Adrenal gland (tissue), 19 donors: ENCODE measurements at regions of chr2 and their contacts with region 1.

Region 1: GRCh38 chr2:28406276-28407096 is 13.8 kb downstream of the FOSL2 start:
- DNase-seq: peak in 6 of 7 donors; percentile 51 to 77 (median 69)
- H3K4me3 ChIP-seq: peak overlapping the region in 1 of 4 donors; percentile 15
- H3K27ac ChIP-seq: peak overlapping the region; percentile 31 to 100 (median 59)
- H3K4me1 ChIP-seq: peaks cover 58 to 79% of the 10 kb centered on the region in 2 donors
- H3K27me3 ChIP-seq: no peaks in the 10 kb centered on the region
- CTCF ChIP-seq: peak in 1 of 6 experiments; percentile 20
- POLR2A ChIP-seq: no peak

Region 2: DNA sequence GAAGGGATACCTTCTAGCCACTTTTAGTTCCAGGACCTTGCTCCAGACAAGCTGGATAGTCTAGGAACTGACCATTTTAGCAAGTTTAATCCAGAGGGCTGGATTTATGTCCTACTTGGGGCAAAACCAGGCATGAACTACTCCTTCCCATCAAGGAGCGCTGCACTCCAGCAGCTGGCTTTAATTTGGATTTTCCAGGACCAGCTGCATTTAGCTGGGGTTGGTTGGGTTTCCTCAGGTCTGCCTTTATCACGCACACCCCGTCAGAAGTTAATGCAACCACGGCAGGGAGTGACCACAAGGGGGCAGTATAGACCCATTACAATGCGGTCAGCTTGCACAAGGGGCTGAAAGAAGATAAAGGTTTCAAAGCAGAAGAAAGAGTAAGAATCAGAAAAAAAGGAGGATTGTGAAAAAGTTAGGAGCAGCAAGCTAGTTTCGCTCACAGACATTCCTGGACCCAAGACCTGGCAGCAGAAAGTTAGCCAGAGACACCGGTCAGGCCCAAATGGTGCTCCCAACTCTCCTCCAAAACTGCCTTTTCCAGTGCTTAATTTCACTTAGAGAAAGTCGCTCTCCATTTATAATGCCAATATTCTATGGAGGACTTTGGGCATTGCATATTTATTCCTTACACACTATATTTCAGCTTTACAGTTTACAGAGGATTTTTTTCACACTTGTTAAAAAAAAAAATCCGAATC is 702.7 kb before region 1 on chr2:
- intact Hi-C with region 1: loop called in 1 of 2 experiments (anchors 10 kb)
- DNase-seq: peak; percentile 87 to 96 (median 89)
- H3K4me3 ChIP-seq: no peak overlapping the region
- H3K27ac ChIP-seq: peak overlapping the region in 3 of 5 donors; percentile 51 to 85 (median 54)
- H3K4me1 ChIP-seq: peaks cover 22 to 37% of the 10 kb centered on the region in 2 donors
- H3K27me3 ChIP-seq: no peaks in the 10 kb centered on the region
- CTCF ChIP-seq: peak; percentile 93 to 98 (median 95)
- POLR2A ChIP-seq: no peak

Region 3: GRCh38 chr2:27890146-27890923 is 516.2 kb before region 1 on chr2 and contains the starts of genes BABAM2 and RBKS:
- intact Hi-C with region 1: loop called in 1 of 2 experiments (anchors 10 kb)
- DNase-seq: peak; percentile 88 to 96 (median 93)
- H3K4me3 ChIP-seq: peak within 1 kb of the TSS; percentile 28 to 91 (median 78)
- H3K27ac ChIP-seq: peak within 1 kb of the TSS; percentile 90 to 100 (median 98)
- H3K4me1 ChIP-seq: peaks cover 31 to 81% of the 10 kb centered on the region in 2 donors
- H3K27me3 ChIP-seq: no peaks in the 10 kb centered on the region
- CTCF ChIP-seq: peak in 1 of 6 experiments; percentile 3
- POLR2A ChIP-seq: peak; percentile 79 to 91
- total RNA-seq, gene BABAM2: 88.2 to 925 (median 373) TPM
- total RNA-seq, gene RBKS: 9.1 to 54.4 (median 25.9) TPM

Region 4: DNA sequence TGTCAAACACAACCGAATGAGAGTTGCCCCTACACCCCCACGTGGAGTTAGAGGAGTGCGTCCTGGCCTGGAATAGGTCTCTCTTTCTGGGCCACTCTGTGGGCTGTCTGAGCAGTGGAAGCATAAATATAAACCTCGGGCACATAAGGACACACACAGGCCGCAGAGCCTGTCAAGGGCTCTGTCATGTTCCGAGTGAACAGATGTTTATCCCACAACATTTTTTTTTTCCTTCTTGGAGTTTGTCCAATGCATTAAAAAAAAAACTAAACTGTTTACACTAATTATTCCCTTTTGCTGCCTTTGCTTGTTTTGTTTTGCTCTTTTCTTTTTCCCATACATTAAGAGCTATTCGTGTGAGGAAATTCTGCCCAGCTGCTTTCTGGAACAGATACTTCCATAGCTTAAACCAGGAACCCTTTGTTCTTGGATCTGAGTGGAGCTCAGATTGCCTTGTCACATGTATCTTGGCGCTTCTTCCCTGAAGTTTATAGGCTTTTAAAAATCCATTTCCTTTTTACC is 242.1 kb before region 1 on chr2:
- intact Hi-C with region 1: no loop called
- DNase-seq: peak in 4 of 7 donors; percentile 52 to 85 (median 64)
- H3K4me3 ChIP-seq: no peak overlapping the region
- H3K27ac ChIP-seq: peak overlapping the region in 3 of 5 donors; percentile 35 to 66 (median 45)
- H3K4me1 ChIP-seq: peaks cover 23 to 40% of the 10 kb centered on the region in 2 donors
- H3K27me3 ChIP-seq: no peaks in the 10 kb centered on the region
- CTCF ChIP-seq: no peak
- POLR2A ChIP-seq: no peak

Region 5: DNA sequence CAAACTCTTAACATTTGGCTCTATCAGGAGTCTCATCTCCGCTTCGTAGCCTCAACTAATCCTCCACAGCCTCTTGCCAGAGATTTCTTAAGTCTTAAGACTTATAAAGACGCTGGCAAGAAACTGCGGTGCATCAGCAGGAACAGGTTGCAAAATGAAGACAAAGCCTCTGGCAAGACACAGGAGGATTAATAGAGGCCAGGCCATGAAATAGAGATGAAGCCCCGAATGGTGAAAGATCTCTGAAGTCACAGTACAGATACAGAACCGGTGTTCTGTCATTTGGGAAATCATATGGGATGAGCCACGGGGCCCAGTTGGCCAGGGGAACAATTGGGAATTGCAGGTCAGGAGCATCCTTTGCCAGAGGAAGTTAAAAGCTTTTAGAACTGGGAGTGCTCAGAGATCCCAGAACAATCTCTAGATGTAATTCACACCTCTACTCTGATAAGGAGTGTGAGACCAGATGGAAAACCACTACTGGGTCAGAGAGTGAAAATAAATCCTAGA is 204.8 kb before region 1 on chr2:
- intact Hi-C with region 1: no loop called
- DNase-seq: no peak
- H3K4me3 ChIP-seq: no peak overlapping the region
- H3K27ac ChIP-seq: no peak overlapping the region
- H3K4me1 ChIP-seq: peaks cover 0 to 13% of the 10 kb centered on the region in 2 donors
- H3K27me3 ChIP-seq: no peaks in the 10 kb centered on the region
- CTCF ChIP-seq: no peak
- POLR2A ChIP-seq: no peak

Region 6: GRCh38 chr2:28392297-28393113 is 14.0 kb before region 1 on chr2 and contains the start of gene FOSL2:
- intact Hi-C with region 1: no loop called
- DNase-seq: peak; percentile 97 to 99 (median 98)
- H3K4me3 ChIP-seq: peak within 1 kb of the TSS; percentile 87 to 90 (median 89)
- H3K27ac ChIP-seq: peak within 1 kb of the TSS; percentile 94 to 100 (median 98)
- H3K4me1 ChIP-seq: peaks cover 12 to 18% of the 10 kb centered on the region in 2 donors
- H3K27me3 ChIP-seq: no peaks in the 10 kb centered on the region
- CTCF ChIP-seq: peak in 2 of 6 experiments; percentile 2 to 11
- POLR2A ChIP-seq: peak; percentile 98 to 100
- total RNA-seq, gene FOSL2: 66.9 to 760 (median 429) TPM